ENCODE measurements at regions of chr5 and their contacts with region 1.

Region 1: DNA sequence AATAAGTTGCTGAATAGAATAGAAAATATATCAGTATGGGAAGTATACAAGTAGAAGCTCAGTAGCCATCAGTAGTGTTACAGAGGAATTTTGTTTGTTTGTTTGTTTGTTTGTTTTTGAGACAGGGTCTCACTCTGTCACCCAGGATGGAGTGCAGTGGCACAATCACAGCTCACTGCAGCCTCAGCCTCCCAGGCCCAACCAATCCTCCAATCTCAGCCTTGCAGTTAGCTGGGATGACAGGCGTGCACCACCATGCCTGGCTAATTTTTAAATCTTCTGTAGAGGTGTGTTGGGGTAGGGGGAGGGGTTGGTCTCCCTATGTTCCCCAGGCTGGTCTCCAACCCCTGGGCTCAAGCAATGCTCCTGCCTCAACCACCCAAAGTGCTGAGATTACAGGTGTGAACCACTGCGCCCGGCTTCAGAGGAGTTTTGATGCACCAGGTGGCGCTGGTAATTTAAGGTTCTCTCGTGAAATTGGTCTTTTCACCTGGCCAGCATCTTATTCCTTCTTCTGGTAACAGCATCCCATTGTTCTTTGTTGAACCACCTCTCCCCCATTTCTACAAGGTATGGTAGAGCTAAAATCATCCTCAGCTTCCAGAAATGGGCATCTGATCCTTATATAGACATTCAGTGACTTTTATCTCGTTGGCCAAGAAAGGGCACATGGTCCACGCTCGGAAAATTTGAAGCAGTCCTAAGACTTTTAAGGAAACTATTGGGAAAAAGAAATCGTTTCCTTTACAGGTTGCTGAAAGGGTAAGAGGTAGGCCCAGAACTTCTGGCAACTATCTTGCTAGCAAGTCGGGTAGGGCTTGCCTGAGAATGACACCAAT is 157.1 kb downstream of the ARRDC3 start:
- DNase-seq: peak; percentile 18 to 35 (median 31)
- H3K4me3 ChIP-seq: no peak overlapping the region
- H3K27ac ChIP-seq: no peak overlapping the region
- H3K4me1 ChIP-seq: peaks cover 0 to 2% (median 0%) of the 10 kb centered on the region in 4 experiments
- H3K27me3 ChIP-seq: no peaks in the 10 kb centered on the region

Region 2: DNA sequence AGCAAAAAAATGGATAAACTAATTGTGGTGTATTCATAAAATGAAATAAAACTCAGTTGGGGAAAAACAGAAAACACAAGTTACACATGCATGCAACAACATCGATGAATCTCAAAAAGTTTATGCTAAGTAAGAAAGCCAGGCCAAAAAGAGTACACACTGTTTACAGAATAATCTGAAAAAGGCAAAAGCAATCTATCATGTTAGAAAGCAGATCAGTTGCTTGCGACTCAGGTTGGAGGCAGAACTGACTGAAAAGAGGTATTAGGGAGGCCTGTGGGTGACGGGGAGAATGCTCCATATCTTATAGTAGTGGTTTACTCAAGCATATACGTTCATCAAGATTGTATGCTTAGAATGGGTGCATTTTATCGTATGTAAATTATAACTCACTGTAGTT is 37.8 kb after region 1 on chr5:
- CTCF ChIA-PET with region 1: interaction called, 3 read pairs
- POLR2A ChIA-PET with region 1: interaction called, 10 read pairs
- DNase-seq: no peak
- H3K4me3 ChIP-seq: no peak overlapping the region
- H3K27ac ChIP-seq: no peak overlapping the region
- H3K4me1 ChIP-seq: peaks cover 0 to 8% (median 3%) of the 10 kb centered on the region in 4 experiments
- H3K27me3 ChIP-seq: no peaks in the 10 kb centered on the region

Region 3: DNA sequence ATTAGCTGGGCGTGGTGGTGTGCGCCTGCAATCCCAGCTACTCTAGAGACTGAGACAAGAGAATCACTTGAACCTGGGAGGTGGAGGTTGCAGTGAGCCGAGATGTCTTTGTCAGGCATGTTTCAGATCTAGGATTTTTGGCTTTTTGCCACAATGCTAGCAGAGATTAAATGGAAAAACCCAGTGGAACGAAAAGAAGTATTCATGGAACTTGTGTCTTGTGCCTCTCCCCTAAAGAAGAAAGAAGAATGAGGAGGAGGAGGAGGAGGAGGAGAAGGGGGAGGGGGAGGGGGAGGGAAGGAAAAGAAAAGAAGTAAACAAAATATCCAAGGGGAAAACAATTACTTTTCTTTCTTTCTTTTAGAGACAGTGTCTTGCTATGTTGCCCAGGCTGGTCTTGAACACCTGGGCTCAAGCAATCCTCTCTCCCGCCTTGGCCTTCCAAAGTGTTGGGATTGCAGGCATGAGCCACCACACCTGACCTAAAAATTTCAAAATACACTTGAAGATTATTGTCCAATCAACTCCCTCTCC is 51.1 kb after region 1 on chr5:
- CTCF ChIA-PET with region 1: no interaction called
- POLR2A ChIA-PET with region 1: no interaction called
- DNase-seq: no peak
- H3K4me3 ChIP-seq: no peak overlapping the region
- H3K27ac ChIP-seq: no peak overlapping the region
- H3K4me1 ChIP-seq: peaks cover 0 to 29% (median 24%) of the 10 kb centered on the region in 4 experiments
- H3K27me3 ChIP-seq: peaks cover 0 to 7% (median 0%) of the 10 kb centered on the region in 5 experiments